Activated CD4-positive, alpha-beta T cell treated with anti-CD3 and anti-CD28 coated beads for 36 hours (primary cell): ENCODE measurements at regions of chr16 and their contacts with region 1.

Region 1: DNA sequence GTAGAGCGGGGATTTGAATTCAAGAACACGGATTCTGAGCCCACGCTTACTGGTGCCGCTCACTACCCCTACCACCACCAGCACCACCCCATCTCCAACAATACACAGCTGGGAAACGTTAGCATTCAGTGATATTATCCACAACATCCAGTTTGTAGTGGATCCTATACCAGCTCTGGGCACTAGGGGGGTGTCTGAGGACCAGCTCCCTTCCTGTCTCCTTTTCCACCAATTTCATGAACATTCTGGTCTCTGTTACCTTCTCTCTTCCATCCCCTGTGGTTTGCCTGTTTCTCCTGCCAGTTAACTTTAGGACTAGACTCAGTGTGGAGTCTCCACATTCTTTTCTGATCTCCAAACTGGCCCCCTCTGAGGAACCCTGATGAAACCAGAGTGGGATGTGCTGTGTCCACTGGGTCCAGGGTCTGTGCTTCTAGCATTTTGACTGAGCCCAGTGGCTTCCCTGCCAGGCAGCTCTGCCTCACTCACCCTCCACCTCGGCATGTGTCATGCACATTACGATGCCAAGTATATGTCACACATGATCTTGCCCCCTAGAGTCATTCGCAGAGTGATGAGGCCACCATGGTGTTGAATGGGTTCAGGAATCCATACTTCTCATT is 187.0 kb upstream of the CDH13 start:
- DNase-seq: no peak
- ATAC-seq: no peak
- H3K4me3 Mint-ChIP-seq: no peak overlapping the region
- H3K27ac Mint-ChIP-seq: no peak overlapping the region
- H3K4me1 Mint-ChIP-seq: no peaks in the 10 kb centered on the region
- H3K27me3 Mint-ChIP-seq: peaks cover 19% of the 10 kb centered on the region

Region 2: GRCh38 chr16:82456683-82457082 is 16.9 kb after region 1 on chr16:
- CTCF ChIA-PET with region 1: interaction called, 15 read pairs
- POLR2A ChIA-PET with region 1: interaction called, 3 read pairs
- intact Hi-C with region 1: no loop called
- DNase-seq: peak; percentile 70
- ATAC-seq: peak; percentile 70
- H3K4me3 Mint-ChIP-seq: no peak overlapping the region
- H3K27ac Mint-ChIP-seq: no peak overlapping the region
- H3K4me1 Mint-ChIP-seq: no peaks in the 10 kb centered on the region
- H3K27me3 Mint-ChIP-seq: peaks cover 7% of the 10 kb centered on the region

Region 3: DNA sequence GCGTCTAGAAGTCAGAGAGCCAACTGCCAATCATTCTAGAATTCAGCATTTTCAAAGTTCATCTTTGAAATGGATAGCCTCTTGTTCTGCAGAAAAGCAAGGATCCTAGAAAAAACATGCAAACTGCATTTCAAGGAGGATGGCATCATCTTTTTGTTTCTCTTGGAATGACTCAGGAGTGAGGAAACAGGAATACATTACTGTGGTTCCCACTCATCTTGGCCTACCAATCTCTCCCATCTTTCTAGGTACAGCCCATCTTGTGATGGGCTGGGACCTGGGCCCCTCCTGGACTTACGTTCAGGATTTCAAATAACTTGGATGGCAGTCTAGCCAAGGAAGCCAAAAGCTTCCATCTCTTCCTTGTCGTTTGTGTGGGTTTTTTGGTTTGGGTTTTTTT is 550.4 kb after region 1 on chr16:
- CTCF ChIA-PET with region 1: no interaction called
- POLR2A ChIA-PET with region 1: no interaction called
- intact Hi-C with region 1: no loop called
- DNase-seq: no peak
- ATAC-seq: no peak
- H3K4me3 Mint-ChIP-seq: no peak overlapping the region
- H3K27ac Mint-ChIP-seq: no peak overlapping the region
- H3K4me1 Mint-ChIP-seq: no peaks in the 10 kb centered on the region
- H3K27me3 Mint-ChIP-seq: no peaks in the 10 kb centered on the region